ENCODE measurements at regions of chr10 and their contacts with region 1.

Region 1: DNA sequence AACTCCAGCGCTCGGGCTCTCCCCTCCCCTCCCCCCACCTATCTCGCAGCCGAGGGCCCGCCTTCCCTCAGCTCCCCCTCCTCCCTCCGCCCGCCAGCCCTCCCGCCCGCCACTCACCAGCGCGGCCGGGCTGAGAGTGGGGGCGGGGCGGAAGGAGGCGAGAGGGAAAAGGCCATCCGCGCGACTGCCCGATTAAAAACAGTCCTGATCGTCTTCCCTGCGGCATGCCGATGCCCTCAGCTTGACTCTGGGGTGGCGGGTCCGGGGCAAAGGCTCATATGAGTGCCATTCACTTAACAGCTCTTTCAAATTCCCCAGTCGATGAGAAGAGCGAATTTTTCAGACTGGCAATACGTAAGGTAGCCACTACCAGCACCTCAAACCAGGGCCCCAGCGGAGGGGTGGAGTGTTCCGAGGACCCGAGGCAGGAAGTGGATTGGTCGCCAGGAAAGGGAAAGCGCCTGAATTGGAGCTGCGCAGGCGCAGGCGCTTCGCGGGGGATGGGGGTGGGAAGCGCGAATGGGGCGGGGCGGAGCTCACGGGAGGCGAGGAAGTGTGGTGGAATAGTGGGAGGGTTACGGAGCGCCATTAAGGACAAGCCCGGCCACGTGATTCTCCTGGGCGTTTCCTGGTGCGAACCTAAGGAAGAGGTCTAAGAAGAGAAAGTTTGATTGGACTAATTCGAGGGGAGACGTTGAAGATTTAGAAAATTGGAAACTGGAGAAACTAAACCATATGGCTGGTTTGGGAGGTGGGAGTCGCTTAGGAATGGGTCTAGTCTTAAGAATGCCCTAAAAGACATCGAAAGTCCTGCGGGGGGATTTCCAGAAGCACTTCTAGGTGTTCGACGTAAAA is at the start of gene UPF2:
- DNase-seq: peak; percentile 99
- ATAC-seq: peak; percentile 90
- H3K4me3 Mint-ChIP-seq: peak within 1 kb of the TSS; percentile 99
- H3K27ac Mint-ChIP-seq: peak within 1 kb of the TSS; percentile 100
- H3K4me1 Mint-ChIP-seq: peaks cover 37% of the 10 kb centered on the region
- H3K27me3 Mint-ChIP-seq: peaks cover 2% of the 10 kb centered on the region
- total RNA-seq, gene UPF2: 34.2 to 46.8 TPM

Region 2: DNA sequence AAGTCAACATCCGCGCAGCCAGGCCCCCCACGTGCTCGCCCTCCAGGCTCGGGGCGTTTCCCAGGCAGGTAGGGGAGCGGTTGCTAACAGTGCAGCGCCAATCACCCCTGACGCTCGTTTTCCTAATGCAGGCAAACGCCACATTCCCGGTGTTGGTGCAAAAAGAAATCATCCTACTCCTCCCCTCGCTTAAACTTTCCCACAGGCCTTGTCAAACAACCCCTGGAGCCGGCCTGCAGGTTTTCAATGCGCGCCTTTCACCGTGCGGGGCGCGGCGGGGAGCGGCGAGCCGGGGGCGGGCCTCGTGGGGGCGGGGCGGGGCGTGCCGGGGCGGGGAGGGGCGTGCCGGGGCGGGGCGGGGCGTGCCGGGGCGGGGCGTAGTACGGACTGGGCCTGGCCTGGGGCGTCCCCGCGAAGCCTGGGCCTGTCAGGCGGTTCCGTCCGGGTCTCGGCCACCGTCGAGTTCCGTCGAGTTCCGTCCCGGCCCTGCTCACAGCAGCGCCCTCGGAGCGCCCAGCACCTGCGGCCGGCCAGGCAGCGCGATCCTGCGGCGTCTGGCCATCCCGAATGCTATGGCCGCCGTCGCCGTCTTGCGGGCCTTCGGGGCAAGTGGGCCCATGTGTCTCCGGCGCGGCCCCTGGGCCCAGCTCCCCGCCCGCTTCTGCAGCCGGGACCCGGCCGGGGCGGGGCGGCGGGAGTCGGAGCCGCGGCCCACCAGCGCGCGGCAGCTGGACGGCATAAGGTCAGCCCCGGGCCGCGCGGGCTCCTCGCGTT is 300.8 kb before region 1 on chr10 and contains the start of gene ECHDC3:
- CTCF ChIA-PET with region 1: no interaction called
- POLR2A ChIA-PET with region 1: no interaction called
- intact Hi-C with region 1: loop called in 1 of 2 experiments (anchors 1 kb)
- DNase-seq: peak; percentile 72
- ATAC-seq: peak; percentile 87
- H3K4me3 Mint-ChIP-seq: peak within 1 kb of the TSS; percentile 61
- H3K27ac Mint-ChIP-seq: no peak within 1 kb of the TSS
- H3K4me1 Mint-ChIP-seq: peaks cover 6% of the 10 kb centered on the region
- H3K27me3 Mint-ChIP-seq: peaks cover 14% of the 10 kb centered on the region
- total RNA-seq, gene ECHDC3: 3.5 to 3.8 TPM

Region 3: DNA sequence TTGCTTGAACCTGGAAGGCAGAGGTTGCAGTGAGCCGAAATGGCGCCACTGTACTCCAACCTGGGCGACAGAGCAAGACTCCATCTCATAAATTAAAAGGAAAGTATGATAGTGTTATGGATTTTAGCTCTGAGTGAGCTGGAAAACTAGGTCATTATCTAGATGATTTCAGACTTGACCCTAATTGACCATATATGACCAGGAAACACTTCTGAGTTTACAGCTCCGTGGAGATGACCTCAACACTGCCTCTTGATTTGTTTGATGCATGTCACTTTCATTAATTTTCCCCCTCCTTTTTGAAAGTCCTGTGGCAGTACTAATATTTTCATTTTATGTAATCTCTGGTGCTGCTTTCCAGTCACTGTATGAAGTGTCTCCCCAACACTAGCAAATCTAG is 78.6 kb after region 1 on chr10:
- CTCF ChIA-PET with region 1: interaction called, 3 read pairs
- POLR2A ChIA-PET with region 1: no interaction called
- intact Hi-C with region 1: loop called (anchors 1 to 2 kb)
- DNase-seq: no peak
- ATAC-seq: no peak
- H3K4me3 Mint-ChIP-seq: peak overlapping the region; percentile 54
- H3K27ac Mint-ChIP-seq: peak overlapping the region; percentile 94
- H3K4me1 Mint-ChIP-seq: peaks cover 32% of the 10 kb centered on the region
- H3K27me3 Mint-ChIP-seq: no peaks in the 10 kb centered on the region

Region 4: GRCh38 chr10:12129222-12130111 is 86.4 kb after region 1 on chr10 and contains the start of gene SEC61A2:
- CTCF ChIA-PET with region 1: interaction called, 6 read pairs
- POLR2A ChIA-PET with region 1: interaction called, 3 read pairs
- intact Hi-C with region 1: loop called (anchors 1 kb)
- DNase-seq: peak; percentile 99
- ATAC-seq: peak; percentile 96
- H3K4me3 Mint-ChIP-seq: peak within 1 kb of the TSS; percentile 81
- H3K27ac Mint-ChIP-seq: peak within 1 kb of the TSS; percentile 76
- H3K4me1 Mint-ChIP-seq: peaks cover 19% of the 10 kb centered on the region
- H3K27me3 Mint-ChIP-seq: no peaks in the 10 kb centered on the region
- total RNA-seq, gene SEC61A2: 11.3 to 12.0 TPM

Region 5: GRCh38 chr10:13160934-13161856 is 1118.2 kb after region 1 on chr10 and contains the start of gene MCM10:
- CTCF ChIA-PET with region 1: no interaction called
- POLR2A ChIA-PET with region 1: no interaction called
- intact Hi-C with region 1: loop called (anchors 5 to 10 kb)
- DNase-seq: peak; percentile 98
- ATAC-seq: peak; percentile 100
- H3K4me3 Mint-ChIP-seq: peak within 1 kb of the TSS; percentile 91
- H3K27ac Mint-ChIP-seq: peak within 1 kb of the TSS; percentile 86
- H3K4me1 Mint-ChIP-seq: peaks cover 26% of the 10 kb centered on the region
- H3K27me3 Mint-ChIP-seq: no peaks in the 10 kb centered on the region
- total RNA-seq, gene MCM10: 86.0 to 86.2 TPM

Region 6: GRCh38 chr10:13348216-13349017 is 1305.4 kb after region 1 on chr10 and contains the start of gene SEPHS1:
- CTCF ChIA-PET with region 1: no interaction called
- POLR2A ChIA-PET with region 1: no interaction called
- intact Hi-C with region 1: loop called in 1 of 2 experiments (anchors 2 kb)
- DNase-seq: peak; percentile 93
- ATAC-seq: peak; percentile 77
- H3K4me3 Mint-ChIP-seq: peak within 1 kb of the TSS; percentile 87
- H3K27ac Mint-ChIP-seq: peak within 1 kb of the TSS; percentile 95
- H3K4me1 Mint-ChIP-seq: peaks cover 57% of the 10 kb centered on the region
- H3K27me3 Mint-ChIP-seq: no peaks in the 10 kb centered on the region
- total RNA-seq, gene SEPHS1: 74.5 to 74.7 TPM

Measured in activated CD4-positive, alpha-beta T cell treated with anti-CD3 and anti-CD28 coated beads for 36 hours (primary cell).